CD8-positive, alpha-beta T cell (primary cell): ENCODE measurements at regions of chr9 and their contacts with region 1.

Region 1: GRCh38 chr9:125169895-125170294 is 19.7 kb downstream of the PPP6C start:
- DNase-seq: no peak
- ATAC-seq: no peak
- H3K4me3 ChIP-seq: no peak overlapping the region
- H3K4me3 Mint-ChIP-seq: no peak overlapping the region
- H3K27ac ChIP-seq: no peak overlapping the region
- H3K27ac Mint-ChIP-seq: no peak overlapping the region
- H3K4me1 ChIP-seq: peaks cover 10% of the 10 kb centered on the region
- H3K4me1 Mint-ChIP-seq: peaks cover 37% of the 10 kb centered on the region
- H3K27me3 ChIP-seq: no peaks in the 10 kb centered on the region
- H3K27me3 Mint-ChIP-seq: no peaks in the 10 kb centered on the region
- CTCF ChIP-seq: no peak

Region 2: DNA sequence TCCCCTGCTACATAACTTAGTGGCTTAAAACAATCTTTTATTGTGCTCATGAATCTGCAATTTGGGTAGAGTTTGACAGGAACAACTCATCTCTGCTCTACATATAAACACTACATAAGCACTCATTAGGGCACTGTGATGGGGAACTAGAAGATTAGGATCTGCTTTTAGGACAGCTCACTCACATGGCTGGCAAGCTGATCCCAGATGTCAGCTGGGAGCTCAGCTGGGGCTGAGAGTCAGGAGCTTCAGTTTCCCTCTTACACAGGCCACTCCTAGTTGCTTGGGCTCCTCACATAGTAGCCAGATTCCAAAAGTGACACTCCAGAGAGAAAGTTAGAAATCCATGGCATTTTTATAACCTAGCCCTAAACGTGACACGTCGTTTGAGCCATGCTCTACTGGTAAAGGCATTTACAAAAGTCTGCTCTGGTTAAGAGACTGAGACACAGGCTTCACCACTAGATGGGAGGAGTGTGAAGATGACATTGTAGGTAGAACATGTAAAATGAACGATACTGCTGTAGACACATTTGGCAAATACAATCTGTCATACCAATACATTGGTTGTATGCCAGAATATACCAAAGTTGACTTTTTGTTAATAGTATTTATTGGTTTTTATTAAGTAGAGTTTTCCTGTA is 50.1 kb before region 1 on chr9:
- CTCF ChIA-PET with region 1: no interaction called
- POLR2A ChIA-PET with region 1: no interaction called
- intact Hi-C with region 1: loop called in 1 of 2 experiments (anchors 5 kb)
- DNase-seq: peak in 3 of 9 experiments; percentile 29 to 64 (median 44)
- ATAC-seq: peak; percentile 87
- H3K4me3 ChIP-seq: no peak overlapping the region
- H3K4me3 Mint-ChIP-seq: no peak overlapping the region
- H3K27ac ChIP-seq: no peak overlapping the region
- H3K27ac Mint-ChIP-seq: no peak overlapping the region
- H3K4me1 ChIP-seq: peaks cover 15% of the 10 kb centered on the region
- H3K4me1 Mint-ChIP-seq: peaks cover 40% of the 10 kb centered on the region
- H3K27me3 ChIP-seq: no peaks in the 10 kb centered on the region
- H3K27me3 Mint-ChIP-seq: no peaks in the 10 kb centered on the region
- CTCF ChIP-seq: peak; percentile 48

Region 3: GRCh38 chr9:125150349-125151245 is 19.3 kb before region 1 on chr9:
- CTCF ChIA-PET with region 1: no interaction called
- POLR2A ChIA-PET with region 1: no interaction called
- intact Hi-C with region 1: no loop called
- DNase-seq: no peak
- ATAC-seq: no peak
- H3K4me3 ChIP-seq: no peak overlapping the region
- H3K4me3 Mint-ChIP-seq: no peak overlapping the region
- H3K27ac ChIP-seq: no peak overlapping the region
- H3K27ac Mint-ChIP-seq: no peak overlapping the region
- H3K4me1 ChIP-seq: no peaks in the 10 kb centered on the region
- H3K4me1 Mint-ChIP-seq: peaks cover 7% of the 10 kb centered on the region
- H3K27me3 ChIP-seq: no peaks in the 10 kb centered on the region
- H3K27me3 Mint-ChIP-seq: no peaks in the 10 kb centered on the region
- CTCF ChIP-seq: no peak